ENCODE measurements at regions of chr12 and their contacts with region 1.

Region 1: DNA sequence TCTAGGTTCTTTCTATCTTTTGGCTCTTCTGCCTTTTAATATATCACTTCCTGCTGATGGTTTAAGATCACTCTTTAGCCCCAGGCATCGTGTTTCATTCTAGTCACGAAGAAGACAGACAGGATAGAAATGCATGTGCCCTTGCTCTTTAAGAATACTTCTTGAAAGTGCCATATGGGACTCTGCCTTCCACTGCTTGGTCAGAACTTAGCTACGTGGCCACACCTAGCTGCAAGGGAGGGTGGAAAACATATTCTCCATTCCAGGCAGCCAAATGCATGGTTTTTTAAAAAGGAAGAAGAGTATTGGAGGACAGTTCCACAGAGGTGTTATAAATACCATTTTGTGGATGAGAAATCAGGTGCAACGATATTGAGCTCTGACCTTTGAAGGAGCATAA is 143.3 kb downstream of the KLRB1 start:
- DNase-seq: no peak
- ATAC-seq: no peak
- H3K4me3 ChIP-seq: no peak overlapping the region
- H3K4me3 Mint-ChIP-seq: no peak overlapping the region
- H3K27ac ChIP-seq: no peak overlapping the region
- H3K27ac Mint-ChIP-seq: no peak overlapping the region
- H3K4me1 ChIP-seq: no peaks in the 10 kb centered on the region
- H3K4me1 Mint-ChIP-seq: peaks cover 0 to 14% (median 9%) of the 10 kb centered on the region in 7 donors
- H3K27me3 ChIP-seq: no peaks in the 10 kb centered on the region
- H3K27me3 Mint-ChIP-seq: peaks cover 0 to 6% (median 0%) of the 10 kb centered on the region in 5 donors

Region 2: DNA sequence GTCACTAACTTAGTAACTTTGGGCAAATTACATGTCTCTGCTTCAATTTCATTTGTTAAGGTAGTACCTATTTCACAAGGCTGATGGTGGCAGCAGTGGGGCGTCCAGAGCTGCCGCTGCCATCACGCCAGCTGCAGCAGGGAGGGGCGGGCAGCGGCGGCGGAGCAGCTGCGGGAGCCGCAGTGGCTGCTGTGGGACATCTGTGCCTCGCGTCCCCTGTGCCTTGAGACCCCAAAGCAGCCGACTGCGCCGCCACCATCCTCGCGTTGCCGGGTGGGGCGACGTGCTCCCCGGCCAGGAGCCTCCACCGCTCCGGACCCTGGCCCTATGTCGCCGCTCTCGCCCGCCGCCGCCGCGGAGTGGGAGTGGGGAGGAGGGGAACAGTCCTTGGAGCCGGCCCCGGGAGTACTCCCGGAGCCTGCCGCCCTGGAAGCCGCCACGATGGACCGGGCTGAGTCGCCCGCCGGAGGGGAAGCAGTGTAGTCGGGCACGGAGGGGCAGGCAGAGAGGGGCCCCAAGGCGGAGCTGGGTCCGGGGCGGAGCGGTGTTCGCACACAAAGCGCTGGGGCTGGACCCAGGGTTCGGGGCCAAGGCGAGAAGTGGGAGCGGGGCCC is 400.1 kb before region 1 on chr12:
- CTCF ChIA-PET with region 1: no interaction called
- POLR2A ChIA-PET with region 1: no interaction called
- intact Hi-C with region 1: loop called in 1 of 2 experiments (anchors 10 kb)
- DNase-seq: peak in 8 of 9 donors; percentile 32 to 61 (median 42)
- ATAC-seq: peak; percentile 94
- H3K4me3 ChIP-seq: peak overlapping the region; percentile 53
- H3K4me3 Mint-ChIP-seq: peak overlapping the region; percentile 76 to 86 (median 81)
- H3K27ac ChIP-seq: peak overlapping the region; percentile 55
- H3K27ac Mint-ChIP-seq: peak overlapping the region in 5 of 9 donors; percentile 10 to 31 (median 20)
- H3K4me1 ChIP-seq: peaks cover 6 to 10% of the 10 kb centered on the region in 2 donors
- H3K4me1 Mint-ChIP-seq: peaks cover 4 to 13% (median 9%) of the 10 kb centered on the region in 7 donors
- H3K27me3 ChIP-seq: no peaks in the 10 kb centered on the region
- H3K27me3 Mint-ChIP-seq: peaks cover 0 to 30% (median 0%) of the 10 kb centered on the region in 5 donors

Region 3: GRCh38 chr12:9331218-9331626 is 133.2 kb before region 1 on chr12:
- CTCF ChIA-PET with region 1: interaction called, 28 read pairs
- POLR2A ChIA-PET with region 1: no interaction called
- intact Hi-C with region 1: loop called in 1 of 2 experiments (anchors 1 kb)
- DNase-seq: peak; percentile 21 to 77 (median 55)
- ATAC-seq: peak; percentile 87
- H3K4me3 ChIP-seq: no peak overlapping the region
- H3K4me3 Mint-ChIP-seq: peak overlapping the region in 2 of 10 donors; percentile 6 to 33
- H3K27ac ChIP-seq: no peak overlapping the region
- H3K27ac Mint-ChIP-seq: peak overlapping the region in 4 of 9 donors; percentile 50 to 66 (median 62)
- H3K4me1 ChIP-seq: peaks cover 0 to 3% of the 10 kb centered on the region in 2 donors
- H3K4me1 Mint-ChIP-seq: peaks cover 18 to 31% (median 23%) of the 10 kb centered on the region in 7 donors
- H3K27me3 ChIP-seq: no peaks in the 10 kb centered on the region
- H3K27me3 Mint-ChIP-seq: peaks cover 0 to 2% (median 0%) of the 10 kb centered on the region in 5 donors

Region 4: DNA sequence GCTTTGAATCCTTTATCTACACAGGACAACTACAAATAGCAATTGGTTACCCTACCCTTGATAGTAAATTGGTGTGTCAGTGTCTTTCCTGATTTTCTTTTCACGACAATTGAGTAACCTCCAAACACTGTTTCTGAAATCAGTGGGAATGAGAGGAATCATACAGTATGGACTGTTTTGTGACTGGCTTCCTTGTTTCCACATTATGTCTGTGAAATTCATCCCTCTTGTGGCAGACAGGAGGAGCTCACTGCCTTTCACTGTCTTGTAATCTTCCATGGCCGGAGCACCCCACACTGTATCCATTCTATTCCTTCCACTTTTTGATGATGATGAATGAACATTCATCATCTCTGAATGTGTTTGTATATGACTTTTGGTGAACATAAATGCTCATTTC is 92.2 kb before region 1 on chr12:
- CTCF ChIA-PET with region 1: interaction called, 3 read pairs
- POLR2A ChIA-PET with region 1: no interaction called
- intact Hi-C with region 1: loop called in 1 of 2 experiments (anchors 1 kb)
- DNase-seq: peak in 1 of 9 donors; percentile 4
- ATAC-seq: no peak
- H3K4me3 ChIP-seq: no peak overlapping the region
- H3K4me3 Mint-ChIP-seq: no peak overlapping the region
- H3K27ac ChIP-seq: no peak overlapping the region
- H3K27ac Mint-ChIP-seq: no peak overlapping the region
- H3K4me1 ChIP-seq: no peaks in the 10 kb centered on the region
- H3K4me1 Mint-ChIP-seq: peaks cover 0 to 5% (median 3%) of the 10 kb centered on the region in 7 donors
- H3K27me3 ChIP-seq: no peaks in the 10 kb centered on the region
- H3K27me3 Mint-ChIP-seq: peaks cover 0 to 36% (median 0%) of the 10 kb centered on the region in 5 donors

Region 5: GRCh38 chr12:9615420-9616136 is 151.2 kb after region 1 on chr12:
- CTCF ChIA-PET with region 1: no interaction called
- POLR2A ChIA-PET with region 1: no interaction called
- intact Hi-C with region 1: loop called in 1 of 2 experiments (anchors 10 kb)
- DNase-seq: peak in 7 of 9 donors; percentile 28 to 82 (median 69)
- ATAC-seq: peak; percentile 97
- H3K4me3 ChIP-seq: peak overlapping the region; percentile 35
- H3K4me3 Mint-ChIP-seq: peak overlapping the region; percentile 4 to 86 (median 78)
- H3K27ac ChIP-seq: peak overlapping the region; percentile 70
- H3K27ac Mint-ChIP-seq: peak overlapping the region; percentile 92 to 99 (median 96)
- H3K4me1 ChIP-seq: peaks cover 13 to 35% of the 10 kb centered on the region in 2 donors
- H3K4me1 Mint-ChIP-seq: peaks cover 21 to 88% (median 79%) of the 10 kb centered on the region in 7 donors
- H3K27me3 ChIP-seq: no peaks in the 10 kb centered on the region
- H3K27me3 Mint-ChIP-seq: no peaks in the 10 kb centered on the region